K562 (cell line): ENCODE measurements at regions of chr7 and their contacts with region 1.

Region 1: GRCh38 chr7:29915481-29916215 is 74.0 kb downstream of the SCRN1 start:
- DNase-seq: no peak
- ATAC-seq: no peak
- H3K4me3 ChIP-seq: no peak overlapping the region
- H3K27ac ChIP-seq: no peak overlapping the region
- H3K4me1 ChIP-seq: no peaks in the 10 kb centered on the region
- H3K27me3 ChIP-seq: peaks cover 2 to 12% of the 10 kb centered on the region in 2 experiments; a peak in 2 of 5 replicates
- CTCF ChIP-seq: no peak
- EP300 ChIP-seq: no peak
- POLR2A ChIP-seq: no peak
- RAD21 ChIP-seq: no peak

Region 2: DNA sequence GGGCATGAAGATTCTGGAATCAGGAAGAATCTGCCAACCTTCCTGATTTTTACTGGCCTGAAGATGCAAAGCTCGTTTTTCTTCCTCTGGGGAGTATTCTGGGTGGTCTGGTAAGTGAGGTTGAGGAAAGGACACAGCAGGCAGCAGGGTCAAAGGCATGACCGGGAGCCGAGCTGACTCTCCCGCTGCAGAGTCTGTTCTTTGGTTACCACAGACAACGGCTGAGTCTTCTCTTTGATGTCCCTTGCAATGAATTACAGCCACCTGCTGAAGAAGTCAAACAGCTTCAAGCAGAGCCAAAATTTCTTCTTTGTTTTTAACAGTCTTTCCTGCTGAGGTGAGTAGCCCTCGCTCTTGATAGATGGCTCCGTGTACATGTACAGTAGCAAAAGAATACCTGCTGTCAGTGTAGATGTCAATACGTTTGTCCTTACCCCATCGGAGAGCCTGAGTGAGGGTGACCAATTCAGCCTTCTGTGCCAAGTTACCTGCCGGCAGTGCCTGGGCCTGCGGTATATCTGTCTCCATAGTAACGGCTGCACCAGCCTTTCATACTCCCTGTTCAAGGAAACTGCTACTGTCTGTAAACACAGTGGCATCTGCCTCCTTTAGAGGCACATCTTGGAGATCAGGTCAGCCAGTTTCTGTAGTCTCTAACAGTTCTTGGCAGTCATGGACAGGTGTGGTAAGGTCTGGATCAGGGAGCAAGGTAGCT is 275.6 kb before region 1 on chr7:
- CTCF ChIA-PET with region 1: interaction called, 3 read pairs
- POLR2A ChIA-PET with region 1: no interaction called
- in situ Hi-C with region 1: loop called (anchors 10 kb)
- intact Hi-C with region 1: no loop called
- DNase-seq: no peak
- ATAC-seq: no peak
- H3K4me3 ChIP-seq: no peak overlapping the region
- H3K27ac ChIP-seq: no peak overlapping the region
- H3K4me1 ChIP-seq: peaks cover 0 to 5% of the 10 kb centered on the region in 2 experiments; a peak in 1 of 5 replicates
- H3K27me3 ChIP-seq: no peaks in the 10 kb centered on the region
- CTCF ChIP-seq: no peak
- EP300 ChIP-seq: no peak
- POLR2A ChIP-seq: no peak
- RAD21 ChIP-seq: no peak

Region 3: DNA sequence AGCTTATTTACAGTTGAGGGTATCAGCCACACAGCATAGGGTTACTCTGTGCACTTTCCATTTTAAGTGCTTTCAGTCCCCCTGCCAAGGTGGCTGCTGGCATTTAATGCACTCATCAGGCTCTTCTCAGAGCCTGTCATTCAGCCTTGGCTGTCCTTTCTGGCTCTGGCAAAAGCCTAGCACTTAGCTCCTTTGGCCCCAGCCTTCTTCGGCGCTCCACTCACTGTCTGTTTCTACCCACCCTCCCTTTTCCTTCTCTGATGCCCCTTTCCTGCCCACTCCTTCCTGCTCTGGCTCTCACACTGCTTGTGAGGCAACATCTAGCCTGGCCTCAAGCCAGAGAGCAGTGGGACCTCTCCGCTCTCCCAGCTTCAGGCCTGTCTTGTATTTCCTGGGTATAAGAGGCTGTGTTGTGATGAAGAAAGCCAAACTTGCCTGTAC is 49.1 kb before region 1 on chr7:
- CTCF ChIA-PET with region 1: no interaction called
- POLR2A ChIA-PET with region 1: no interaction called
- in situ Hi-C with region 1: no loop called
- intact Hi-C with region 1: no loop called
- DNase-seq: no peak
- ATAC-seq: no peak
- H3K4me3 ChIP-seq: no peak overlapping the region
- H3K27ac ChIP-seq: no peak overlapping the region
- H3K4me1 ChIP-seq: no peaks in the 10 kb centered on the region
- H3K27me3 ChIP-seq: no peaks in the 10 kb centered on the region
- CTCF ChIP-seq: no peak
- EP300 ChIP-seq: no peak
- POLR2A ChIP-seq: no peak
- RAD21 ChIP-seq: no peak